MCF 10A (cell line): ENCODE measurements at regions of chr2 and their contacts with region 1.

Region 1: GRCh38 chr2:240913810-240914644 is 7.9 kb downstream of the CROCC2 start:
- DNase-seq: peak; percentile 76
- H3K4me3 Mint-ChIP-seq: no peak overlapping the region
- H3K27ac Mint-ChIP-seq: no peak overlapping the region
- H3K4me1 Mint-ChIP-seq: peaks cover 24% of the 10 kb centered on the region
- H3K27me3 Mint-ChIP-seq: no peaks in the 10 kb centered on the region
- CTCF ChIP-seq: peak; percentile 97

Region 2: DNA sequence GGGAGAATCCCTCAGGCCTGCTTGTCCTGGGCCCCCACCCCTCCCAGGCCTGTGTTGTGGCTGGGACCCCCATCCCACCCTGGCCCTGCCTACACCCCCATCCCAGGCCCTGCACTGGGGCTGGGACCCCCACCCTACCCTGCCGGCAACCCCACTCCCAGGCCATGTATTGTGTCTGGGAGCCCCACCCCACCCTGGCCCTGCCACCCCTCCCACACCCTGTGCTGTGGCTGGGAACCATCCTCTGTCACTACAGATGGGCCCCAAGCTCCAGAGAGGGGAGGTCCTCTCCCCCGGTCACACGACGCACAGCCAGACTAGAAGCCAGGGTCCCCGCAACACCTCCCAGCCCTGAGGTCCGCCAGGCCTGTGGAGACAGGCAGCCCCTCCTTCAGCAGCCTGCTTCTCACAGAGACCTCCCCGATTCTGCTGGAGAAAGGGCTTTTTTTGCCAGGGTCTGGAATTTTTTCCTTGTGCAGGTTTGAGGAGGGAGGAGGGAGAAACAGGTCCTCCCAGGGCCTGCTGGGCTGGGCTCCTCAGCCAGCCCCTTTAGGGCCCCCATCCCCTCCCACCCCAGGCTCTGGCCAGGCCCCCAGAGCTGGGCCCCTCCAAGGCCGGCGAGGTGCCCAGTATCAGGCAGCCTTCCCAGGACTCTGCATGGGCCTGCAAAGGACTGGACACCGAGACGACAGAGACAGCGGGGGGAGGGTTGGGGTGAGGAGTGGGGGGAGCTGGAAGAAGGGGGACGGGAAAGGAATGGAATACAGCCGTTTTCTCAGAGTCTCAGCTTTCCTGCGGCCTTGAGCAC is 122.0 kb before region 1 on chr2:
- CTCF ChIA-PET with region 1: no interaction called
- POLR2A ChIA-PET with region 1: no interaction called
- intact Hi-C with region 1: no loop called
- DNase-seq: no peak
- H3K4me3 Mint-ChIP-seq: no peak overlapping the region
- H3K27ac Mint-ChIP-seq: no peak overlapping the region
- H3K4me1 Mint-ChIP-seq: no peaks in the 10 kb centered on the region
- H3K27me3 Mint-ChIP-seq: peaks cover 42% of the 10 kb centered on the region
- CTCF ChIP-seq: no peak

Region 3: GRCh38 chr2:240991373-240992263 is 77.6 kb after region 1 on chr2:
- CTCF ChIA-PET with region 1: interaction called, 5 read pairs
- POLR2A ChIA-PET with region 1: no interaction called
- intact Hi-C with region 1: loop called (anchors 2 kb)
- DNase-seq: peak; percentile 96
- H3K4me3 Mint-ChIP-seq: peak overlapping the region; percentile 46
- H3K27ac Mint-ChIP-seq: peak overlapping the region; percentile 91
- H3K4me1 Mint-ChIP-seq: peaks cover 25% of the 10 kb centered on the region
- H3K27me3 Mint-ChIP-seq: no peaks in the 10 kb centered on the region
- CTCF ChIP-seq: no peak

Region 4: GRCh38 chr2:241064008-241064801 is 150.2 kb after region 1 on chr2:
- CTCF ChIA-PET with region 1: no interaction called
- POLR2A ChIA-PET with region 1: no interaction called
- intact Hi-C with region 1: loop called (anchors 5 kb)
- DNase-seq: peak; percentile 57
- H3K4me3 Mint-ChIP-seq: peak overlapping the region; percentile 74
- H3K27ac Mint-ChIP-seq: no peak overlapping the region
- H3K4me1 Mint-ChIP-seq: peaks cover 21% of the 10 kb centered on the region
- H3K27me3 Mint-ChIP-seq: no peaks in the 10 kb centered on the region
- CTCF ChIP-seq: no peak